H1 (cell line): ENCODE measurements at regions of chr6 and their contacts with region 1.

Region 1: DNA sequence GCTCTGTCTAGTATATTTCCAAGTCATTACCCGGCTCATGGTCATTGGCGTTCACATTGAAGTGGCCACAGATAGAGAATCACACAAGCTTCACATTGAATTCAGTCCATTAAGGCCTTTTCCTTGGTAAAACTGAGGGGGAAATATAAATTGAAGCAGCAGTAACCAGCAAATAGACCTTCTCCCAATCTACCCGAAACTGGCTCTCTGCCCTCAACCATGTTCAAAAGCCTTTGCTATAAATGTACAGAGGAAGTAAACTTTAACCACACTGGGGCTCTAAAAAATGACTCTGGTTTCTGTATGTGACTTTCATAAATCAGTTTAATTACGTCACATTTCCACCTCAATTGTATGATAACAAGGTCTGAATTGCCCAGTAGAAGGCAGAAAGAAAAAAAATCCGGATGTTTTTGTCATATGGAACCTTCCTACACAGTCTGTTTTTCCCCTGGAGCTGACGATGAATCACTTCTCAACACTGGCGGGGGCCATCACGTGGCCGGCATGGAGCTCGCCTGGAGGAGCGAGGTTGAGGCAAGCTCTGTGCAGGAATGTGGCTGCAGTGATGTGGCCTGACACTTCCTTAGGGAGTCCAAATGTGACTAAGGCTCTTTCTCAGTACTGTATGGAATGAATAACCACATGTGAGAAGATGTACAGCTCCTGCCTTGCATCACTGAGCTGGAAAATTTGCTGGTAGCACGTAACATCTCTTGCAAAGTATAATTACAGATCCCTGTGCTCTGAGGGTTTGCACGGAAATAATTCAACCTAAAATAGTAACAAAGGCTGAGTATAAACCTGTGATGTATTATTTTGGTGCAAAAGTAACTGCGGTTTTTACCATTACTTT is 58.6 kb upstream of the SNX9 start:
- DNase-seq: no peak
- H3K4me3 ChIP-seq: no peak overlapping the region
- H3K27ac ChIP-seq: no peak overlapping the region
- H3K4me1 ChIP-seq: peaks cover 11 to 17% (median 13%) of the 10 kb centered on the region in 4 experiments; a peak in 6 of 7 replicates
- H3K27me3 ChIP-seq: no peaks in the 10 kb centered on the region
- CTCF ChIP-seq: no peak
- EP300 ChIP-seq: no peak
- POLR2A ChIP-seq: no peak
- RAD21 ChIP-seq: no peak

Region 2: GRCh38 chr6:157008568-157008967 is 755.8 kb before region 1 on chr6:
- CTCF ChIA-PET with region 1: no interaction called
- POLR2A ChIA-PET with region 1: no interaction called
- DNase-seq: no peak
- H3K4me3 ChIP-seq: no peak overlapping the region
- H3K27ac ChIP-seq: no peak overlapping the region
- H3K4me1 ChIP-seq: peaks cover 1 to 9% (median 7%) of the 10 kb centered on the region in 4 experiments; a peak in 4 of 7 replicates
- H3K27me3 ChIP-seq: no peaks in the 10 kb centered on the region
- CTCF ChIP-seq: no peak
- EP300 ChIP-seq: no peak
- POLR2A ChIP-seq: no peak
- RAD21 ChIP-seq: no peak

Region 3: DNA sequence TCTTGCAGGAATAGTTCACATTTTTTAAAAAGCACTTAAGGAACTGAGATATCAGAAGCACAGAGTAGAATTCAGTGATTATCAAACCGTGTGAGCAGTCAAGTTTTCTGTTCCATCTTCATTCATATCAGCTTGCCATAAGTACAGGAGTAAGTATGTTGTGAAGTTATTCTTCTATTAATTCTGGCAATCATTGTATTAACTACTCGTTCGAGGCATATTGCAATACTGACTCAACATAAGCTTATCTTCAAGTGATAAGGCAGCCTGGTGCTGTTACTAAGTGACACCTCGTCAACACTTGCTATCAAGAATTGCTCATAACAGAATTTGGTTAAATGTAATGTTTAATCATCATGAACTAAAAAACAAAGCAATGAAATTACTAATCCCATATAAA is 17.0 kb before region 1 on chr6:
- CTCF ChIA-PET with region 1: no interaction called
- POLR2A ChIA-PET with region 1: no interaction called
- DNase-seq: no peak
- H3K4me3 ChIP-seq: no peak overlapping the region
- H3K27ac ChIP-seq: no peak overlapping the region
- H3K4me1 ChIP-seq: peaks cover 0 to 4% (median under 1%) of the 10 kb centered on the region in 4 experiments; a peak in 3 of 7 replicates
- H3K27me3 ChIP-seq: no peaks in the 10 kb centered on the region
- CTCF ChIP-seq: no peak
- EP300 ChIP-seq: no peak
- POLR2A ChIP-seq: no peak
- RAD21 ChIP-seq: no peak

Region 4: GRCh38 chr6:157946865-157947532 is 182.6 kb after region 1 on chr6:
- CTCF ChIA-PET with region 1: interaction called, 10 read pairs
- POLR2A ChIA-PET with region 1: no interaction called
- DNase-seq: no peak
- H3K4me3 ChIP-seq: no peak overlapping the region
- H3K27ac ChIP-seq: no peak overlapping the region
- H3K4me1 ChIP-seq: no peaks in the 10 kb centered on the region
- H3K27me3 ChIP-seq: no peaks in the 10 kb centered on the region
- CTCF ChIP-seq: peak in 2 of 3 experiments; percentile 65 to 82; a peak in 3 of 4 replicates
- EP300 ChIP-seq: no peak
- POLR2A ChIP-seq: peak in 1 of 2 experiments; percentile 20; a peak in 1 of 3 replicates
- RAD21 ChIP-seq: peak; percentile 91 to 93